IMR-90 (cell line): ENCODE measurements at regions of chr21 and their contacts with region 1.

Region 1: GRCh38 chr21:37863842-37864241 is 52.4 kb downstream of the KCNJ6 start:
- DNase-seq: peak; percentile 94
- ATAC-seq: peak; percentile 31; the same call in 1 of the 2 replicates
- H3K4me3 ChIP-seq: no peak overlapping the region
- H3K27ac ChIP-seq: no peak overlapping the region
- H3K4me1 ChIP-seq: peaks cover 10% of the 10 kb centered on the region
- H3K27me3 ChIP-seq: no peaks in the 10 kb centered on the region
- CTCF ChIP-seq: no peak
- POLR2A ChIP-seq: no peak
- RAD21 ChIP-seq: no peak

Region 2: DNA sequence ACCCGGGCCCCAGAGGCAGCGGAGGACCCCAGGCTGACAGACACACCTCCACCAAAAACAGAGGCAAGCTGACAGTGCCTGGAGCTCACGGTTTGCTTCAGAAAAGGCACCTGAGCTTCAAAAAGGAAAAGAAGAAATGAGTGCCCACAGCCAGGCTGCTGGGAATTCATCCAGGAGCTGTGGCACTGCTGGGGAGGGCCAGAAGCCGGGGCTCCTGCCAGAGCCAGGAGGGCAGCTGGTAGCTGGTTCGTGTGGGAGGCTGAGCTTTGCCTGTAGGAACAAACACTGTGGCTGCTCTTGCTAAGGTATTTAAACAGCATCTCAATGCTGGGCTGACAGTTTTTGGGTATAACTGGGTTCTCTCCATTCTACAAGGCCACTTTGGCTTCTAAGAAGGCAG is 32.9 kb after region 1 on chr21:
- CTCF ChIA-PET with region 1: no interaction called
- POLR2A ChIA-PET with region 1: interaction called, 14 read pairs
- dilution Hi-C with region 1: no loop called
- in situ Hi-C with region 1: no loop called
- intact Hi-C with region 1: no loop called
- DNase-seq: no peak
- ATAC-seq: no peak
- H3K4me3 ChIP-seq: no peak overlapping the region
- H3K27ac ChIP-seq: no peak overlapping the region
- H3K4me1 ChIP-seq: no peaks in the 10 kb centered on the region
- H3K27me3 ChIP-seq: peaks cover 50% of the 10 kb centered on the region
- CTCF ChIP-seq: no peak
- POLR2A ChIP-seq: no peak
- RAD21 ChIP-seq: no peak

Region 3: GRCh38 chr21:37974081-37974480 is 110.2 kb after region 1 on chr21:
- CTCF ChIA-PET with region 1: interaction called, 11 read pairs
- POLR2A ChIA-PET with region 1: no interaction called
- dilution Hi-C with region 1: no loop called
- in situ Hi-C with region 1: no loop called
- intact Hi-C with region 1: no loop called
- DNase-seq: peak; percentile 1
- ATAC-seq: no peak
- H3K4me3 ChIP-seq: no peak overlapping the region
- H3K27ac ChIP-seq: no peak overlapping the region
- H3K4me1 ChIP-seq: no peaks in the 10 kb centered on the region
- H3K27me3 ChIP-seq: peaks cover 20% of the 10 kb centered on the region
- CTCF ChIP-seq: no peak
- POLR2A ChIP-seq: no peak
- RAD21 ChIP-seq: no peak